ENCODE measurements at regions of chr4 and their contacts with region 1.

Region 1: GRCh38 chr4:145609481-145610427 is 9.4 kb upstream of the MMAA start:
- DNase-seq: no peak
- ATAC-seq: peak; percentile 44

Region 2: GRCh38 chr4:145216535-145216934 is 393.2 kb before region 1 on chr4:
- intact Hi-C with region 1: loop called (anchors 5 kb)
- DNase-seq: no peak
- ATAC-seq: no peak

Region 3: GRCh38 chr4:145234091-145234706 is 375.6 kb before region 1 on chr4:
- intact Hi-C with region 1: loop called (anchors 5 kb)
- DNase-seq: no peak
- ATAC-seq: peak; percentile 74